BJ (cell line): ENCODE measurements at regions of chr5 and their contacts with region 1.

Region 1: GRCh38 chr5:31825518-31826068 is 186.7 kb downstream of the PDZD2 start:
- DNase-seq: peak; percentile 8
- H3K4me3 ChIP-seq: no peak overlapping the region
- H3K27me3 ChIP-seq: peaks cover 8% of the 10 kb centered on the region
- CTCF ChIP-seq: peak; percentile 63

Region 2: GRCh38 chr5:31645420-31646081 is 180.0 kb before region 1 on chr5:
- CTCF ChIA-PET with region 1: no interaction called
- POLR2A ChIA-PET with region 1: no interaction called
- DNase-seq: no peak
- H3K4me3 ChIP-seq: no peak overlapping the region
- H3K27me3 ChIP-seq: peaks cover 11% of the 10 kb centered on the region
- CTCF ChIP-seq: no peak

Region 3: DNA sequence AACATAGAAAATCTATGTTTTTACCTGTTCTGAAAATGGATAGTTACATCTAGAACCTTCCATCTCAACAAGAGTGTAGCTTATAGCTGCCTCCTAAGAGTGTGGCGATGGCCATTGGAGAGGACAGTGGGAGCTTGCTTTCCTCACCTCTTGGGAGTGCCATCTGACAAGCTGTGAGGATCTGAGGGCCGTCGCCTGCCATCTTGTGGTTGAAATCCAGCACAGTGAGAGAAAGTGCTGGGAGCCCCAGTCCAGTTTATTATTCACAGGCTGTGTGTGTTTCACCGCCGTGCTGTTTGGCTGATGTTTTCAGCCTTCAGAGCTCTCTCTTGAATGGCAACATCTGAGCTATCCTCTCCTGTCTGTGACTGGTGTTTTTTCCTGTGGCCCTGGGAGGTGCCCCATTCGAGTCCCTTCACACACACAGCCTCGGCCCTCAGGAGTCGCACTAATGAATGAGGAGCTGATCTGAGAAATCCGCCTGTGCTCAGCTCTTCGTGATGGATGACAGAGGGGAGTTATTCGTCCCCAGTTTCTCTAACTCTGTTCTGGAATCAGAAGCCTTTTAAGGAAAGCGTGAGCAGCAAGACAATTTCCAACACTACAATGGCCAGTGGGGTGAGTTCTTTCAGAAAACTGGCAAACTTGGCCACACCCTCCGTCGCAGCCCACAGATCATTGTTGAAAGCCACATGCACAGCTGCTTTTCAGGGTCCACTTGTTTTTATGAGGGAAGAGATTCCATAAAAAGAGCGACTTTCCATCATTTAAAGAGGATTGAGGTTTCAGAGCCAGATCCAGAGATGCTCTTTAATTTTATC is 16.3 kb before region 1 on chr5:
- CTCF ChIA-PET with region 1: interaction called, 20 read pairs
- POLR2A ChIA-PET with region 1: no interaction called
- DNase-seq: no peak
- H3K4me3 ChIP-seq: no peak overlapping the region
- H3K27me3 ChIP-seq: peaks cover 7% of the 10 kb centered on the region
- CTCF ChIP-seq: peak; percentile 73

Region 4: DNA sequence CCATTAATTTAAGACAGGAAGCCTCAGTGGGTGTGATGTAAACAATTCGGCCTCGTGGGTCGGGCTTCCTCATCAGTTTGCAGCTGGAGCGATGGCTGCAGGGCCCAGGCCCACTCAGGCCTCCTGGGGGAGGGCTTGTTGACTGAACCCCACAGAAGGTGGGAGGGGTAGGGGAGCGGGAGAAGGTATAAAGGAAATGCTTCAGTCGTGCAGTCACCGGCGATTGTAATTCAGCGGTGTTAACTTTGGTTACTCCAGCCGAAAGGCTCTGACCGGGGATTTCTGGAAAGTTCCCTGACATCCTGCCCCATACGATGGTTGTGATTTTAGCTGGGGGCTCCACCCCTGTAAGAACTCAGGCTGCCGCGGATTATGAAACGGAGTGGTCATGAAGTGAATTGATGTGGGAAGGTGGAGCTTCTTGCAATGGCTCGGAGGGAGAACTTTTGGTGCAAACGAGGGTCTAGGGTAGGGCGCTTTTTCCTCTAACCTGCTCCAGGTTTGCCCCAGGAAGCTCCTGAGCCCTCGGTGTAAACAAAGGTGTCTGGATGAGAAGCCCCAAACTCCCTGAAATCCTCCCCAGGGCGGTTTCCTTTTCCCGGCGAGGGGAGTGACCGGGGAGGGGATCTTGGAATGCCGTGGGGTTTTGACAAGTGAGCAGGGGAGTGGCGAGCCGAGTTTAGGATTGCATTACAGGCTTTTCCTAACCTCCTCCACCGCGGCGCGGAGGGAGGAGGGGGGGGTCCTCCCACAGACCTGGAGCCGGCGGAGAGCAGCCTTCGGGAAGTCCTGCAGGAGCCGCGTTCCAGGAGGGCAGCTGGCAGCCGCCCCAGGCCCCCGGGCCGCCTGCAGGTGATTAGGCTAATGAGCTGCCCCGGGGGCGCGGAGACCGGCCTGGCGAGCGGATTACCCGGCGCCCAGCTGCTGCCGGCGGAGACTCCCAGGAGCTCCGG is 28.9 kb after region 1 on chr5:
- CTCF ChIA-PET with region 1: interaction called, 13 read pairs
- POLR2A ChIA-PET with region 1: no interaction called
- DNase-seq: no peak
- H3K4me3 ChIP-seq: peak overlapping the region; percentile 33
- H3K27me3 ChIP-seq: peaks cover 17% of the 10 kb centered on the region
- CTCF ChIP-seq: no peak

Region 5: DNA sequence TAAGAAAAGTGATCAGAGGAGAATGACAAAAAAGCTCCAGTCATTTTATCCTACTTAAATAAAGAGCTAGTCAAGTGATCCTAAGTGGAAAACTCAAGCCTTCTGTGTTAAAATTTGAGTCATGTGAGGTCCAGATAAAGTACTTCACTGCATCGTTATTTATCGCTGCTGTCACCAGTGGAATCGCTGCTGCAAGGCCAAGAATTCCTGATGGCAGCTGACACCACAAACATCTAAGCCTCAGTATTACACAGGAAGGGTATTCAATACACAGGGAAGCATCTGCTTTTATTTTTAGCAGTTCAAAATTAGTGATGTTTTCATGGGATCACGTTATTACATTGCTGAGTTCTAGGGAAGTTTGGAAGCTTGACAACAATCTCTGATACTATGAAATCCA is 158.3 kb after region 1 on chr5:
- CTCF ChIA-PET with region 1: no interaction called
- POLR2A ChIA-PET with region 1: no interaction called
- DNase-seq: peak; percentile 50
- H3K4me3 ChIP-seq: no peak overlapping the region
- H3K27me3 ChIP-seq: no peaks in the 10 kb centered on the region; the same call in 1 of the 2 replicates
- CTCF ChIP-seq: no peak

Region 6: DNA sequence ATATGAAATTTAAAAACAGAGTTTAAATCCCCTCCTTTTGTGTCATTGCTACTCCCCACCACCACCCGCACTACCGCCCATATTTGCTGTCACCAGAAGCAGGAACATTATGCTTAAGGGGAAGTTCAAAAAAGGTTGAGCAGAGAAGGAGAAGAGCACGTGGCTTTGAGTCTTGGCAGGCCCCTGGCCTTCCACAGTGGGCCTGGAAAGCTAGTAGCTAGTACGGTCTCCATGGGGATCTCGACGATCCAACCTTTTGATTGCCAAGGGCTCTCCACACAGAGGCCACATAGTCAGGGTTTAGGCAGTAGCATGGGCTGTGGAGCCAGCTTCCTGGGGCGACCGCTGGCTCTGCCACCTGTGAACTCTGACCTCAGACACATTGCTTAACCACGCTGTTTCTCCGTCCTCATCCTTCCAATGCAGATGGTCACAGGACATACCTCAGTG is 258.4 kb after region 1 on chr5:
- CTCF ChIA-PET with region 1: interaction called, 170 read pairs
- POLR2A ChIA-PET with region 1: no interaction called
- DNase-seq: no peak
- H3K4me3 ChIP-seq: no peak overlapping the region
- H3K27me3 ChIP-seq: 0 out of 2 replicates have a peak, but pooled peaks cover 1% of the 10 kb centered on the region
- CTCF ChIP-seq: no peak

Region 7: GRCh38 chr5:32092938-32093812 is 267.6 kb after region 1 on chr5:
- CTCF ChIA-PET with region 1: interaction called, 54 read pairs
- POLR2A ChIA-PET with region 1: no interaction called
- DNase-seq: no peak
- H3K4me3 ChIP-seq: no peak overlapping the region
- H3K27me3 ChIP-seq: no peaks in the 10 kb centered on the region
- CTCF ChIP-seq: peak; percentile 72